HCT116 (cell line): ENCODE measurements at regions of chr16 and their contacts with region 1.

Region 1: GRCh38 chr16:86519649-86520316 is 9.5 kb downstream of the FOXF1 start:
- DNase-seq: peak; percentile 63
- ATAC-seq: peak; percentile 79
- H3K4me3 ChIP-seq: peak overlapping the region in 1 of 2 experiments; percentile 8; a peak in 1 of 4 replicates
- H3K27ac ChIP-seq: no peak overlapping the region; the same call in 1 of the 2 replicates
- H3K4me1 ChIP-seq: peaks cover 4 to 13% of the 10 kb centered on the region in 2 experiments; a peak in 3 of 4 replicates
- H3K27me3 ChIP-seq: no peaks in the 10 kb centered on the region
- CTCF ChIP-seq: peak; percentile 95 to 97 (median 97)
- POLR2A ChIP-seq: no peak
- RAD21 ChIP-seq: peak; percentile 95

Region 2: DNA sequence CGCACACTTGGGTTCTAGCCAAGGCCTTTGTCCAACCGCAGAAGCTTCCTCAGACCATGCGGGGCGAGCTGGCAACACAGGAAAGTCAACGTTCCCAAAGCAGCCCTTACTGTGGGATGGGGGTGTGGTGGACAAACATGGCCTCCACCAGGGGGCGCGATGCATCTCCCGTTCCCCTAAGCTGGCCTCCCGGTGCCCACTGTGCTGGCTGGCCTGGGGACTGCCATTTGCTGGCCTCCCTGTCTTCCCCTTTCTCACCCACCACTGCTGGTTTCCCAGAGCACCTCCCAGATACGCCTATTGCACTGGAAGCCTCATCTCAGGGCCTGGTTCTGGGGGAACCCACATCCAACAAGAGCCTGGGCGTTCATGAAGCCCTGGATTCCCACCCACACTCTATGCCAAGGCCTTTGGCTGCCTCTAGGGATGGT is 475.5 kb before region 1 on chr16:
- CTCF ChIA-PET with region 1: interaction called, 23 read pairs
- POLR2A ChIA-PET with region 1: no interaction called
- RAD21 ChIA-PET with region 1: interaction called, 3 to 9 read pairs
- intact Hi-C with region 1: loop called (anchors 1 kb)
- DNase-seq: peak; percentile 57
- ATAC-seq: peak; percentile 93
- H3K4me3 ChIP-seq: no peak overlapping the region
- H3K27ac ChIP-seq: no peak overlapping the region
- H3K4me1 ChIP-seq: peaks cover 0 to 3% of the 10 kb centered on the region in 2 experiments; a peak in 1 of 4 replicates
- H3K27me3 ChIP-seq: peaks cover 32% of the 10 kb centered on the region
- CTCF ChIP-seq: peak; percentile 66 to 97 (median 95)
- POLR2A ChIP-seq: no peak
- RAD21 ChIP-seq: peak; percentile 68

Region 3: GRCh38 chr16:86072328-86073102 is 447.3 kb before region 1 on chr16:
- CTCF ChIA-PET with region 1: interaction called, 79 read pairs
- POLR2A ChIA-PET with region 1: no interaction called
- RAD21 ChIA-PET with region 1: interaction called, 9 to 12 read pairs
- intact Hi-C with region 1: loop called (anchors 1 kb)
- DNase-seq: peak; percentile 68
- ATAC-seq: peak; percentile 87
- H3K4me3 ChIP-seq: no peak overlapping the region; a peak in 1 of 4 replicates
- H3K27ac ChIP-seq: no peak overlapping the region
- H3K4me1 ChIP-seq: peaks cover 0 to 4% of the 10 kb centered on the region in 2 experiments; a peak in 1 of 4 replicates
- H3K27me3 ChIP-seq: no peaks in the 10 kb centered on the region
- CTCF ChIP-seq: peak; percentile 81 to 96 (median 88)
- POLR2A ChIP-seq: no peak
- RAD21 ChIP-seq: peak; percentile 92

Region 4: GRCh38 chr16:86158688-86159360 is 361.0 kb before region 1 on chr16:
- CTCF ChIA-PET with region 1: interaction called, 12 read pairs
- POLR2A ChIA-PET with region 1: interaction called, 3 read pairs
- RAD21 ChIA-PET with region 1: interaction called in 1 of 2 experiments, 5 read pairs
- intact Hi-C with region 1: loop called (anchors 2 kb)
- DNase-seq: peak; percentile 64
- ATAC-seq: peak; percentile 91
- H3K4me3 ChIP-seq: peak overlapping the region; percentile 42 to 53
- H3K27ac ChIP-seq: peak overlapping the region; percentile 44
- H3K4me1 ChIP-seq: peaks cover 0 to 13% of the 10 kb centered on the region in 2 experiments; a peak in 1 of 4 replicates
- H3K27me3 ChIP-seq: peaks cover 8% of the 10 kb centered on the region
- CTCF ChIP-seq: peak; percentile 38 to 57 (median 44); a peak in 5 of 6 replicates
- POLR2A ChIP-seq: peak; percentile 93
- RAD21 ChIP-seq: peak; percentile 44

Region 5: DNA sequence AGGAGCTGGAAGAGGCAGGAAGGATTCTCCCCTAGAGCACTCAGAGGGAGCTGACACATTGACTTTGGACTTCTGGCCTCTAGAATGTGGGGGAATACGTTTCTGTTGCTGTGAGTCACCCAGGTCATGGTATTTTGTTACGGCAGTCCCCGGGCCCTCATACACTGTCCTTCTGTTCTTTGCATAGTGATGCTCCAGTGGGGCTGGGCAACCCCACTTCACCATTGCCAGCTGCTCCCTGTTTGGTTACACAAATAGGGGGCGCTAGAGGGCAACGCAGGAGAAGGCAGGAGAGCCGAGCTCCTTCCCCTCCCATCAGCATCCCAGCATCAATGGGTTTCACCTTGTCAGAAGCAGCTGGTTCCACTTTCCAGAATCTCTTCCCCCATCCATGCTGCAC is 267.2 kb before region 1 on chr16:
- CTCF ChIA-PET with region 1: interaction called, 139 read pairs
- POLR2A ChIA-PET with region 1: interaction called, 4 read pairs
- RAD21 ChIA-PET with region 1: interaction called, 12 to 32 read pairs
- intact Hi-C with region 1: loop called (anchors 1 kb)
- DNase-seq: peak; percentile 42
- ATAC-seq: peak; percentile 97
- H3K4me3 ChIP-seq: no peak overlapping the region
- H3K27ac ChIP-seq: no peak overlapping the region
- H3K4me1 ChIP-seq: no peaks in the 10 kb centered on the region
- H3K27me3 ChIP-seq: peaks cover 24% of the 10 kb centered on the region
- CTCF ChIP-seq: peak; percentile 82 to 90 (median 86)
- POLR2A ChIP-seq: no peak
- RAD21 ChIP-seq: peak; percentile 87

Region 6: DNA sequence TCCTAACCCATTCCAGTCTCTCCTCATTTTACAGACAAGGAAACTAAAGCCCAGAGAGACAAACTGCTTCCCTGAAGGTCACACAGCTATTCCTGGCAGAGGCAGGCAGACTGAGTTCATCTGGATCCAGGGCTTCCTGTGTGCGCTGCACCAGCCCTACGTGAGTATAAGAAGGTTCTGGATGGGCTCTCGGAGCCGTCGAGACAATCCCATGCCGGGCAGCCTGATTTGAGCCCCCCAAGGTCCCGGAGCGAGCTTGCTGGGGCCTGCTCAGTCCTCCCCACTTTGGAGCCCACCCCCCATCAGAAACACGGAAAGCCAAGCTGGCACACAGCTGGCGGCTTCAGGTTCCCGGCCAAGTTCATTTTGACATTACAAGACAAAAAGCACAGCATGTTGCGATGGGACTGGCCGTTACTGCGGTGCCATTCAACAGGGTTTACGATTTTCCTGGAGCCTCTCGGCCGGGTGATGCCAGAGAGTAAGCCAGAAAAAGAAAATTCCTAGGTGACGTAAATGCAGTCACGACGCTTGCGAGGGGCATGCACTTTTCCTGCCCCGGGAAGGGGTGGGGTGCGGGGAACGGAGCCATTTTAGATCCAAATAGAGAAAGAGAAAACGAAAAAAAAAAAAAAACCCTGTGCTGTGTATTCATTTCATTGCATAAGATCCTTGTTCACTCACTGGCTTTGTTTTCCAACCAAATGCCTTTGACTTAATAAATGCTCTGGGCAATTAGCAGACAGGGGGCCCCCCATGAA is 176.6 kb before region 1 on chr16:
- CTCF ChIA-PET with region 1: interaction called, 49 read pairs
- POLR2A ChIA-PET with region 1: interaction called, 4 read pairs
- RAD21 ChIA-PET with region 1: interaction called, 8 to 12 read pairs
- intact Hi-C with region 1: loop called (anchors 1 kb)
- DNase-seq: no peak
- ATAC-seq: no peak
- H3K4me3 ChIP-seq: no peak overlapping the region
- H3K27ac ChIP-seq: no peak overlapping the region
- H3K4me1 ChIP-seq: peaks cover 13 to 32% of the 10 kb centered on the region in 2 experiments
- H3K27me3 ChIP-seq: no peaks in the 10 kb centered on the region
- CTCF ChIP-seq: no peak
- POLR2A ChIP-seq: no peak
- RAD21 ChIP-seq: no peak